Esophagus squamous epithelium (tissue), 5 donors: ENCODE measurements at regions of chr1 and their contacts with region 1.

Region 1: DNA sequence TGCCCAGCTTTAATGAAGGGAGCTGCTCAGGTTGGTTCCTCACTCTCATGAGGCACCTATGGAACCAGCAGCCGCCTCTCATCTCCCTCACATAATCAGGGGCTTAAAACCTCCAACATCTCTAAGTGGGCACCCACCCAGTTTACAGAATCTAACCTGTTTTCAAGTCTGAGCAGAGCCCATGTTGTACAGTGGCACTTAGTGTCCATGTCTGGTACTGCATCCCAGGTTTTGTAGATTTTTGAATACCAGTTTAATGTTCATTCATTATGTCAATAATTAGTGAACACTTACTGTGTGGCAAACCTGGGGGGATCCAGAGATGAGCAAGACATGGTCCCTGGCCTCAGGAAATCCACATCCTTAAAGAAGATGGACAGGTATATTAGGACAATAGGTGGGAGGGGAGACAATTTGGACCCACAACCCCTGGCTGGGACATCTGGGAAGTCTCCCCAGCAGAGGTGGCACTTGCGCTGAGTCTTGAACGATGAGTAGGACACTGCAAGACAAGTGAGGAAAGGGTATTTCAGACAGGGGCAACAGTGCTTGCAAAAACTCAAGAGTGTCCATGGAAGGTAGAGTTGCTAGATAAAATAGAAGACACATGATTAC is 83.3 kb downstream of the LACTBL1 start:
- DNase-seq: no peak
- H3K4me3 ChIP-seq: no peak overlapping the region
- H3K27ac ChIP-seq: no peak overlapping the region
- H3K4me1 ChIP-seq: no peaks in the 10 kb centered on the region
- H3K27me3 ChIP-seq: peaks cover 0 to 24% (median 0%) of the 10 kb centered on the region in 4 donors
- CTCF ChIP-seq: peak in 5 of 6 experiments; percentile 72 to 92 (median 82)
- POLR2A ChIP-seq: no peak

Region 2: DNA sequence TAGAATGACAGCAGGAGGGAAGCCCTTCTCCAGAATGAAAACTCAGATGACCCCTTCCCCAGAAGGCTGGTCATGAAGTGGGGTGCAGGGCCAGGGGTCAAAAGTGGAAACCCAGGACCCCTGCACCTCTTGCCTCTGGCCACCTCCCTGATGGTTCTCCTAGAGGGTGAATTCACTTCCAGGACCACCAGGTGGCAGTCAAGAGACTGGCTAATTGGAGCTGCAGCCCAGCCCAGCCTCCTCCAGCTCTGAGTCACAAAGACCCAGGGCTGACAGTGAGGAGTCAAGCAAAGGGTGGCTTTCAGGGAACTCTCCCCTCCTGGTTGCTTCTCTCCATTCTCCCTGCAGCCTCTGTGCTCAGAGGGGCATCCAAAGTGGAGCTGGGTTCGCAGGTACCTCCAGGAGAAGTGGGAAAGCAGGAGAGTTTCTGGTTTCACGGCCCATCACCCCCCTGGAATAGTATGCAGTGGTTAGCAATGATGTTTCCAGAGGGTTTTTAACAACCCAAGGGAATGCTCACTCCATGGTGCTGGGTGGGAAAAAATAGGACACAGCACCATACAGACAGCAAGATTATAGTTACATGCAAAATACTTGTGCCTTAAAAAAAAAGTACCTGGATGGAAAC is 184.8 kb before region 1 on chr1:
- intact Hi-C with region 1: loop called (anchors 10 kb)
- DNase-seq: no peak
- H3K4me3 ChIP-seq: no peak overlapping the region
- H3K27ac ChIP-seq: no peak overlapping the region
- H3K4me1 ChIP-seq: peaks cover 0 to under 1% (median 0%) of the 10 kb centered on the region in 3 donors
- H3K27me3 ChIP-seq: peaks cover 0 to 42% (median 0%) of the 10 kb centered on the region in 4 donors
- CTCF ChIP-seq: peak; percentile 74 to 91 (median 88)
- POLR2A ChIP-seq: no peak